Transverse colon (tissue), 4 donors: ENCODE measurements at regions of chr9 and their contacts with region 1.

Region 1: DNA sequence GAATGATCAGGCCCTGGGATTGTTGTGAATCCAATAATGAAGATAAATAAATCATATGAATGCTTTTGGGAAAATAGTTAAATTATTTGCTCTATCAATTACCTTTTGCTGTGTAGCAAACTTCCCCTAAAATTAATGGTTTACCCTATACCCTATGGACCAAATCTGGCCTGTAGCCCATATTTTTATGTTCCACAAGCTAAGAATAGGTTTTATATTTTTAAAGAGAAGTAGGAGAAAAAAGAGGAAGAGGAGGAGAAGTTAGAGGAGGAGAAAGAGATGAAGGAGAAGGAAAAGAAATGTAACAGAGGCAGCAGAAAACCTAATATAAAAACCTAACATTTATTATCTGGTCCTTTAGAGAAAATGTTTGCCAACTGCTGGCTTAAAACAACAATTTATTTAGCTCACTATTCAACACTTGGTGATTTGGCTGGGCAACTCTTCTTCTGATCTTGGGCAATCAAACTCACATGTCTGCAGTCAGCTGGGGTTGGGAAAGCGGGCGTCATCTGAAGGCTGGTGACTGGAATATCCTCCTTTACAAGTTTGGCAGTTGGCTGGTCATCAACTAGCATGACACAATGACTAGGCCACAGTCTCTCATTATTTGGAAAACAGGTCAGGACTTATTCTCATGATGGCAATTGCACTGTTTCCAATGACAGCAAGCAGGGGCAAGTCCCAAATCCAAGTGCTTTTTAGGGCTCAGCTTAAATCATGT is 522.9 kb downstream of the RASEF start:
- DNase-seq: no peak
- H3K4me3 ChIP-seq: no peak overlapping the region
- H3K27ac ChIP-seq: no peak overlapping the region
- H3K4me1 ChIP-seq: no peaks in the 10 kb centered on the region
- H3K27me3 ChIP-seq: no peaks in the 10 kb centered on the region
- CTCF ChIP-seq: no peak
- EP300 ChIP-seq: no peak
- POLR2A ChIP-seq: no peak

Region 2: DNA sequence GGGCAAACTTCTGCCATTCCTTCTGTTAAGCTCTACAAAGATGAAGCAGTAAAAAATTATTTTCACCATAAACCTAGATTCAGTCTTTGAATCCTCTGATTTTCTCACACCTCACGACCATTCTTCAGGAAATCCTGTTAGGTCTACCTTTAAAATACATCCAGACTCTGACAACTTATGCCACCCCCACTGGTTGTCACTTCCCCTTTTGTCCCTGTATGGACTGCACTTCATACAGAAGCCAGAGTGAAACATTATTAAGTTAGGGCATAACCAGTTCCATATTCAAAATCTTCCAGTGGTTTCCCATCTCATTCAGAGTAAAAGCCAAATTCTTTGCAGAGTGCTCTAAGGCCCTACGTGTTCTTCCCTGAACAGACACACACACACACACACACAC is 23.1 kb after region 1 on chr9:
- in situ Hi-C with region 1: no loop called
- intact Hi-C with region 1: loop called (anchors 1 kb)
- DNase-seq: no peak
- H3K4me3 ChIP-seq: no peak overlapping the region
- H3K27ac ChIP-seq: no peak overlapping the region
- H3K4me1 ChIP-seq: peaks cover 0 to 5% (median 2%) of the 10 kb centered on the region in 4 donors
- H3K27me3 ChIP-seq: no peaks in the 10 kb centered on the region
- CTCF ChIP-seq: no peak
- EP300 ChIP-seq: no peak
- POLR2A ChIP-seq: no peak

Region 3: DNA sequence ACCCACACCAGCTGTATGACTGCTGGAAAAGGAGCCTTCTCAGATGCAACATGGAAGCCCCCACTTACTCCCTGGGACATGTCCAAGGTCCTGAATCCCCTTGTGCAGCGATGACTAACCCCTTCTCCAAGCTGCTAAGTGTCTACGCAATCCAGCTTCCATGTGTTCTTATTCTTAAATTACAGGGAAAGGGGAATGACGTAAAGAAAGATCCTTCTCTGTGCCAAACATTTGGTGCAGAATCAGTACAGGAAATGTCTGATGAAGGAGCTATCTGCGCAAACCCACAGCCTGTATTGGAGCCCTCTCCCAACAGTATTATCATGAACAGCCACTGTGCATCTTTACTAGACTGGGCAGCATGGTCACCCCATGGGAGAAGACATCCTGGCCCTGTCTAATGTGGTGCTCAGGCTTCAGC is 815.0 kb after region 1 on chr9:
- in situ Hi-C with region 1: no loop called
- intact Hi-C with region 1: no loop called
- DNase-seq: no peak
- H3K4me3 ChIP-seq: no peak overlapping the region
- H3K27ac ChIP-seq: no peak overlapping the region
- H3K4me1 ChIP-seq: no peaks in the 10 kb centered on the region
- H3K27me3 ChIP-seq: no peaks in the 10 kb centered on the region
- CTCF ChIP-seq: no peak
- EP300 ChIP-seq: no peak
- POLR2A ChIP-seq: no peak